Activated CD4-positive, alpha-beta T cell treated with anti-CD3 and anti-CD28 coated beads, Interleukin-2, amount 10 ng/mL, durations not matched to agents 24 days and 14 days (primary cell): ENCODE measurements at regions of chr16 and their contacts with region 1.

Region 1: DNA sequence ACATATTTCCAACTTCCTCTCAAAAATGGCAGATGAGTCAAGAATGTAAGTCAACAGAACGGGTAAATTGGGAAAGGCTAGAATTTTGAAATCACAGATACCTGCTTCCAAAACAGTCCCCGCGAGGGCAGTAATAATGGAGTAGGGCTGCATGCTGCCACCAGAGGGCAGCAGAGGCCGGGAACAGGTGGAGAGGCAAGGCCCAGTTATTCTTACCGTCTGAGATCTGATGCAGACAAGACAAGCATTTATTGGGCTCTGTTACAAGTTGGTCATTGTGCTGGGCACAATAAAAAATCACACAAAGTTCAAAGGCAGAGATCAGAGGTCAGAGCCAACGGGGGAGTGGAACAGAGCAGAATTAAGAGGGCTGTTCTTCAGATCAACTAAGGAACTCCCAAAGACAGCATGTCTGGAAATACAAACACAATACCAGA is 8.8 kb upstream of the MLKL start:
- DNase-seq: peak; percentile 94
- H3K4me3 Mint-ChIP-seq: no peak overlapping the region
- H3K27ac Mint-ChIP-seq: no peak overlapping the region
- H3K4me1 Mint-ChIP-seq: peaks cover 8% of the 10 kb centered on the region
- H3K27me3 Mint-ChIP-seq: no peaks in the 10 kb centered on the region

Region 2: DNA sequence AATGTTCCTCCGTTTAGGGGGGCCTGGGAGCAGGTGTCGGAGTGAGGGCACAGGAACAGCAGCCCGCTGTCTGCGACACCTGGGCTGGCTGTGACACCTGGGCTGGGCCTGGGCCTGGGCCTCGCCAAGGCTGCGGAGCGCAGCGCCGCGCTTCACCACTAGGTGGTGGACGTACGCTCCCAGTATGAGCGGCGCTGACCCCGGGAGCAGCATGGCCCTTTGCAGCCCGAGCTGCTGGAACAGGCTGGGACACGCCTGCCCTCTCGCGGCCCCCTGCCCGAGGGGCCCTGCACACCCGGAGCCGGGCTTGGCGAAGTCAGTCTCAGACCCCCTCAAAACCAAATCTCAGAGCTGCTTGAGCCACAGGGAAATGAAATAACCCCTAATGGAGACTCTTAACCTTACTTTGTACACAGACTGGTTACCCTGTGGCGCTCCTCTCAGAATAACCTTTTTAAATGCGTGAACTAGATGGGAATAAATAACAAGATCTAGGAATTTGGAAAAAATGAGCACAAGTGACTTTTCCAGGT is 103.7 kb after region 1 on chr16:
- intact Hi-C with region 1: loop called (anchors 2 kb)
- DNase-seq: peak; percentile 93
- H3K4me3 Mint-ChIP-seq: peak overlapping the region; percentile 35
- H3K27ac Mint-ChIP-seq: no peak overlapping the region
- H3K4me1 Mint-ChIP-seq: peaks cover 2% of the 10 kb centered on the region
- H3K27me3 Mint-ChIP-seq: peaks cover 3% of the 10 kb centered on the region

Region 3: GRCh38 chr16:74862741-74863244 is 153.3 kb after region 1 on chr16:
- intact Hi-C with region 1: loop called (anchors 1 kb)
- DNase-seq: peak; percentile 62
- H3K4me3 Mint-ChIP-seq: no peak overlapping the region
- H3K27ac Mint-ChIP-seq: no peak overlapping the region
- H3K4me1 Mint-ChIP-seq: peaks cover 6% of the 10 kb centered on the region
- H3K27me3 Mint-ChIP-seq: no peaks in the 10 kb centered on the region